ENCODE measurements at regions of chr1 and their contacts with region 1.

Region 1: DNA sequence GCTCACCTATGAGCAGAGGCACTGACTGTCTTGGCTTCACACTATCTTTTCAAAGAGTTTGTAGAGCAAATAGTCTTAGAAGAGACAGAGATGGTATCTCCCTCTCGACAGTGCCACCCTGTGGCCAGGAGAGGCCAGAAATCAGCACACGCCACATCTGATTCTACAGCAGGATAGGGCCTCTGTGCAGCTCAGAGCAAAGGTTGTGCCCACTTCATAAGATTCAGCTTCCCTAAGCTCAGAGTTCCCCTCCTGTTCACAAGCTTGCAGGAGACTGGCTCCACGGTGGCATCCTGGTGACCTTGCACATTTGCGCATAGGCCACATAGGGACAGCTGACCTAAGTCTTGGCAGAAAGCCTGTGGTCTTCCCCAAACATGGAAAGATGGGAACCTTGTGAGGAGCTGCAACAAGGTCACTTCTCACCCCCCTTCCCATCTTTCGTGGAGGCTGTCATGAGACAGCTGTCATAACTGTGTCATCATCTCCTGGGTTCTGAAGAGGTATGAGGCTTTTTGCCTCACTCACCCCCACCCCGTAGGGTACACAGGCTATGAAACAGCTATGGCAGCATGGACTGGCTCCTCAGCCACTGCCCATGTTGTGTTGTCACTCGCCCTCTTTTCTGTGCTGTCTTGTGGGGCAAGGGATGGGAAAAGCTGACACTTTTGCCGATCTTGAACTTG is 3.0 kb downstream of the ITLN2 start:
- H3K4me3 Mint-ChIP-seq: no peak overlapping the region
- H3K27ac Mint-ChIP-seq: no peak overlapping the region
- H3K4me1 Mint-ChIP-seq: peaks cover 6% of the 10 kb centered on the region
- H3K27me3 Mint-ChIP-seq: no peaks in the 10 kb centered on the region

Region 2: GRCh38 chr1:160681067-160681890 is 270.3 kb before region 1 on chr1:
- intact Hi-C with region 1: loop called (anchors 5 kb)
- H3K4me3 Mint-ChIP-seq: no peak overlapping the region
- H3K27ac Mint-ChIP-seq: peak overlapping the region; percentile 65
- H3K4me1 Mint-ChIP-seq: peaks cover 67% of the 10 kb centered on the region
- H3K27me3 Mint-ChIP-seq: no peaks in the 10 kb centered on the region

Region 3: GRCh38 chr1:160726498-160727315 is 224.9 kb before region 1 on chr1:
- intact Hi-C with region 1: loop called (anchors 1 kb)
- H3K4me3 Mint-ChIP-seq: no peak overlapping the region
- H3K27ac Mint-ChIP-seq: no peak overlapping the region
- H3K4me1 Mint-ChIP-seq: peaks cover 22% of the 10 kb centered on the region
- H3K27me3 Mint-ChIP-seq: no peaks in the 10 kb centered on the region

Region 4: DNA sequence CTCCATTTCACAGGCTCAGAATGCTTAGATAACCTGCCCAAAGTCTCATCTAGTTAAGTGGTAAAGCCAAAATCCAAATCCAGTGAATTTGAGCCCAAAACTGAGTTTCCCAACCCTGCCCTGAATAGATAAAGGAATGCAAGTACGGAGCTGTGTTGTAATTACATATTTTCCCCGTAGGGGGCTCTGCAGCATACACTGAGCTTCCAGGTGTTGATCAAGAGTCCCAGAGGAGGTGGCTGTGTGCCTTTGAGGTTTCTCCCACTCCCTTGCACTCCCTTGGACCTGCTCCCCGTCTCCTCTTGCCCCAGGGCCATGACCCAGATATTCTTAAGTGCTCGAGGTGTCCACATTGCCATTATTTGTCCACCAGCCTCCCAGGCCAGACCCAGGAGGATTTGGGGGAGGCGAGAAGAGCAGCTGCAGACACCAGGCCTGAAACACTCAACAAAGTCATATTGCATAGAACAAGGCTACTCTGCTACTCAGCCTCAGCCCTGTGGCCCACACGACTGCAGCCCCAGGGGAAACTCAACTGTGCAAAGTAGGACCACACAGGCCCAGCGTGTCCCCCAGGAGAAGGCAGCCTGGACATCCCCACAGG is 174.0 kb before region 1 on chr1:
- intact Hi-C with region 1: loop called (anchors 2 kb)
- H3K4me3 Mint-ChIP-seq: no peak overlapping the region
- H3K27ac Mint-ChIP-seq: no peak overlapping the region
- H3K4me1 Mint-ChIP-seq: peaks cover 31% of the 10 kb centered on the region
- H3K27me3 Mint-ChIP-seq: peaks cover 4% of the 10 kb centered on the region

Region 5: DNA sequence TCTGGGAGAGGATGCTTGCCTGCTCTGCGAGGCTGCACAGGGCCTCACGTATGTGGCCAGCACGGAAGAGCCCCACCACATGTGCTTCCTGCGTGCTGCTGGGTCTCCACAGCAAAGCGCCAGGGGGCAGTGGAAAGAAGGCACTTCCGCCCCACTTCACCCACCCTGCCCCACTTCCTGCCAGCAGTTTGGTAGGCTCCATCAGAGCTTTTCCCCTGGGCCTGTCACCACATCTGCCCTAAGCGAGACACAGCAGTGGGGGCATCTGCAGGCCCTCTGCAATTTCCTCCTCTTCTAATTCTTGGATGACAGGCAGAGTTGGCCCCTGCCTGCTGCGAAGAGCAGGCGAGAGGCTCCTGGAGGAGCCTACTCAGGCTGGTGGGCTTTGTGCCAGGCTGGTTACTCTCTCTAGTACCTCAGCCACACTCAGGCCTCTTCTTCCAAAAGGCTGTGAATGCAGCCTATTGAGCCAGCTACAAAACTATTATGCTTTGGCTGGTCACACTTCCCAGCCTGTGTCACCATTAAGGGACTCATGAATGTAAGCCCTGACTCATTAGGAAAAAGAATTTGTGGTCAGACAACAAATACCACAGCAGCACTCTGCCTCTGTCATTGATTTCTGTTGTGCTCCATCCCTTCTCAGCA is 113.9 kb before region 1 on chr1:
- intact Hi-C with region 1: loop called (anchors 1 kb)
- H3K4me3 Mint-ChIP-seq: no peak overlapping the region
- H3K27ac Mint-ChIP-seq: no peak overlapping the region
- H3K4me1 Mint-ChIP-seq: peaks cover 29% of the 10 kb centered on the region
- H3K27me3 Mint-ChIP-seq: no peaks in the 10 kb centered on the region

Measured in dendritic cell treated with granulocyte-macrophage colony-stimulating factor and Interleukin-4, amounts not matched to agents 40 ng/mL and 50 ng/mL, for 4 days (primary cell).